ENCODE measurements at regions of chr16 and their contacts with region 1.

Region 1: GRCh38 chr16:56401482-56401881 is 23.9 kb downstream of the AMFR start:
- DNase-seq: no peak

Region 2: DNA sequence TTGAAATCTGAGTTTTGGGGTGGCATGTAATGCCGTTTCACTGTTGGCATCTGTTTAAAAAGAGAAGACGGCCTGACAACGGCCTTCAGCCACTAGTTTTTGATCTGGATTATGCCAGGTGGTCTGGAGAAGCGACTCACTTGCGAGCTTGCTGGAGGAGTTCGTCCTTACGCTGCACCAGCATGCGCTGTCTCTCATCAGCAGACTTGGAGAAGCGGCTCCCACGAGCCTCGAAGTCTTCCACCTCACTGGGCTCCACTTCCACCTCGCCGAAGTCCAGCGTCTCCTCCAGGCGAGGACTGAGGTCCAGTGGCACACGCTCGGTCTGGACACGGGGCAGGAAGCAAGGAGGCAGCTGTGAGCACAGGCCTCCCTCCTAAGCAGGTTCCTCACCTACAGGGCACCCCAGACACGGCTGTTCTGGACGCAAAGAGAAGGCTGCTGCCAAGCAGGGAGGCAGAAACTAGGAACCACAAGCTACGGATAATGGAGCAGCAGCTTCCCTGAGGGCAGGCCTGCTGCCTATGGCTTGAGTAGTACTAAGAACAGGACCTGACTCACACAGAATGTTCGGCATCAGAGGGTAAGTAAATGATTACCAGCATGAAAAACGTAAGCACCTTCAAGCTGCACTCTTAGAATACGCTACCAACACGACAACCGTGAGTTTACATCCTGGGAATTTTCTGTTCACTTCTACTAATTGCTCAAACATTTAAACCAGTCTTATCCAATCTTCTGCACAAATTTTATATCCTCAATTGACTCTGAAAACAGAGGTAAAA is 37.5 kb before region 1 on chr16:
- intact Hi-C with region 1: loop called in 1 of 2 experiments (anchors 1 kb)
- DNase-seq: no peak

Measured in posterior vena cava (tissue), 2 donors.